Adrenal gland (tissue), 19 donors: ENCODE measurements at regions of chr20 and their contacts with region 1.

Region 1: GRCh38 chr20:40689943-40690835 is 1.2 kb upstream of the MAFB start:
- DNase-seq: peak; percentile 90 to 97 (median 94)
- H3K4me3 ChIP-seq: peak overlapping the region in 3 of 4 donors; percentile 36 to 65 (median 37)
- H3K27ac ChIP-seq: peak overlapping the region; percentile 93 to 99 (median 98)
- H3K4me1 ChIP-seq: peaks cover 7 to 14% of the 10 kb centered on the region in 2 donors
- H3K27me3 ChIP-seq: peaks cover 27% of the 10 kb centered on the region
- CTCF ChIP-seq: peak; percentile 77 to 93 (median 92)
- POLR2A ChIP-seq: peak in 1 of 2 donors; percentile 26

Region 2: GRCh38 chr20:39885975-39886649 is 804.1 kb before region 1 on chr20:
- intact Hi-C with region 1: loop called in 1 of 2 experiments (anchors 5 kb)
- DNase-seq: peak; percentile 66 to 93 (median 80)
- H3K4me3 ChIP-seq: no peak overlapping the region
- H3K27ac ChIP-seq: peak overlapping the region in 1 of 5 donors; percentile 51
- H3K4me1 ChIP-seq: peaks cover 0 to 5% of the 10 kb centered on the region in 2 donors
- H3K27me3 ChIP-seq: no peaks in the 10 kb centered on the region
- CTCF ChIP-seq: peak; percentile 51 to 81 (median 76)
- POLR2A ChIP-seq: no peak

Region 3: GRCh38 chr20:40265825-40266533 is 424.2 kb before region 1 on chr20:
- intact Hi-C with region 1: loop called (anchors 5 to 10 kb)
- DNase-seq: peak; percentile 29 to 65 (median 49)
- H3K4me3 ChIP-seq: no peak overlapping the region
- H3K27ac ChIP-seq: no peak overlapping the region
- H3K4me1 ChIP-seq: no peaks in the 10 kb centered on the region
- H3K27me3 ChIP-seq: no peaks in the 10 kb centered on the region
- CTCF ChIP-seq: peak; percentile 23 to 58 (median 51)
- POLR2A ChIP-seq: no peak

Region 4: GRCh38 chr20:40563296-40563944 is 126.8 kb before region 1 on chr20:
- intact Hi-C with region 1: loop called (anchors 10 kb)
- DNase-seq: peak; percentile 35 to 65 (median 50)
- H3K4me3 ChIP-seq: no peak overlapping the region
- H3K27ac ChIP-seq: no peak overlapping the region
- H3K4me1 ChIP-seq: peaks cover 0 to 11% of the 10 kb centered on the region in 2 donors
- H3K27me3 ChIP-seq: no peaks in the 10 kb centered on the region
- CTCF ChIP-seq: no peak
- POLR2A ChIP-seq: no peak